ENCODE measurements at regions of chr9 and their contacts with region 1.

Region 1: DNA sequence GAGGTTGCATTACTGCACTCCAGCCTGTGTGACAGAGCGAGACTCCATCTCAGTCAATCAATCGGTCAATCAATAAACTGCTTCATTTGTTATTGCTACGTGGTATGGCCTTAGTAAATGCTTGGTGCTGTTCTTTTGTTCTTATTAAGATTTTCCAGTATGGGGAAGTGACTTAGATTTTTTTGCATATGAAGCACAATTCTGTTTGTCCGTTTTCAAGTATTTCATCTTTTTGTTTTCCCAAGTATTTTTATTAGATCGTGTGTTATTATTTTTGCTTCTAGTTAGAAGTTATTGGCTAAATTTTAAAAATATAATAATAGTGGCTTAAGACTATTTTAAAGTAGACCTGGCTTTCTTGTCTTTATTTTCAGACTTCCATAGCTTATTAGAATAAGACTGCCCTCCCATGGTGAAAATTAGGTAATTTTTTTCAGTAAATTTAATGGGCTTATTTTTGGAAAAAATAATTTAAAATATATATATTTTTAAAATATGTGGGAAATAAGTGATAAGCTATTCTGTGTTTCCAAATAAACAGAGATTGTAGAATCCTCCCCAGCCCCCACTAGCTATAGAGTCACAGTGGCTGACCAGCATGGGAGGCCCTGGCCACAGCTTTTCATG is 14.7 kb upstream of the OMD start:
- DNase-seq: no peak
- ATAC-seq: no peak
- H3K4me3 ChIP-seq: no peak overlapping the region
- H3K27ac ChIP-seq: no peak overlapping the region
- H3K4me1 ChIP-seq: no peaks in the 10 kb centered on the region
- H3K27me3 ChIP-seq: no peaks in the 10 kb centered on the region
- CTCF ChIP-seq: peak in 7 of 9 donors; percentile 27 to 60 (median 48)

Region 2: GRCh38 chr9:92133949-92134604 is 304.9 kb before region 1 on chr9:
- intact Hi-C with region 1: loop called in 1 of 10 experiments (anchors 10 kb)
- DNase-seq: peak; percentile 72 to 81
- ATAC-seq: peak; percentile 48 to 86 (median 76)
- H3K4me3 ChIP-seq: peak overlapping the region in 3 of 10 donors; percentile 14 to 34 (median 16)
- H3K27ac ChIP-seq: no peak overlapping the region
- H3K4me1 ChIP-seq: peaks cover 0 to 9% (median 7%) of the 10 kb centered on the region in 9 donors
- H3K27me3 ChIP-seq: peaks cover 0 to 22% (median 0%) of the 10 kb centered on the region in 7 donors
- CTCF ChIP-seq: peak; percentile 81 to 99 (median 95)

Region 3: GRCh38 chr9:92332577-92333281 is 106.3 kb before region 1 on chr9:
- intact Hi-C with region 1: loop called in 1 of 10 experiments (anchors 10 kb)
- DNase-seq: peak in 1 of 2 donors; percentile 16
- ATAC-seq: peak in 7 of 8 donors; percentile 57 to 83 (median 79)
- H3K4me3 ChIP-seq: no peak overlapping the region
- H3K27ac ChIP-seq: peak overlapping the region in 8 of 10 donors; percentile 33 to 69 (median 63)
- H3K4me1 ChIP-seq: peaks cover 0 to 15% (median 0%) of the 10 kb centered on the region in 9 donors
- H3K27me3 ChIP-seq: no peaks in the 10 kb centered on the region
- CTCF ChIP-seq: no peak

Region 4: DNA sequence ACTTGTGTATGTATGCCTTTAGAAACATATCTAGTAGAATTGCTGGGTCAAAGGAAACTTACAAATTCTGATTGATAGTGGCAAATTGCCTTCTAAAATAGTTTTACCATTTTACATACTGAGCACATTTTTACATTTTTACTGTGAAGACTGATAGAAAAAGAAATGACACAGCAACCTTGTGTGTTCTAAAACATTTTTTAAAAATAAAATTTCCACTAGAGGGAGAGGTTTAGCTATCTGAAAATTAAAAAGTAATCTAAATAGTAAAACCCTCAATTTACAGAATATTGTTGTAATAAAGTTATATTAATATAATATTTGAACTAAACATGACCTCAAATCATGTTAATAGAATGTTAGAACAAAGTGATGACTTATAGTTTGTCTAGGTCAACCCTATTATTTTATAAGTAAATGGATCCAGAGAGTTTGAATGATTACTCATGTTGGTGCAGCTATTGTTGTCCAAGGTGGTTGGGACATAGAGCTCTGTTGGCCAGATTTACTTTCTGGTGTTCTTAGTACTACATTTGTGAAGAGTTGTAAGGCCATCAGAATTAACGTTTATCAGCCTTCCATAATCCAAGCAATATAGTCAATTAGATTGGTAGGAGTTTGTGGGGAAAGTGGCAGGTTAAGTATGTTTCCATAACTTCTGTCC is 96.1 kb before region 1 on chr9:
- intact Hi-C with region 1: loop called in 5 of 10 experiments (anchors 2 to 10 kb)
- DNase-seq: no peak
- ATAC-seq: no peak
- H3K4me3 ChIP-seq: no peak overlapping the region
- H3K27ac ChIP-seq: no peak overlapping the region
- H3K4me1 ChIP-seq: no peaks in the 10 kb centered on the region
- H3K27me3 ChIP-seq: no peaks in the 10 kb centered on the region
- CTCF ChIP-seq: peak in 6 of 9 donors; percentile 32 to 51 (median 40)

Region 5: DNA sequence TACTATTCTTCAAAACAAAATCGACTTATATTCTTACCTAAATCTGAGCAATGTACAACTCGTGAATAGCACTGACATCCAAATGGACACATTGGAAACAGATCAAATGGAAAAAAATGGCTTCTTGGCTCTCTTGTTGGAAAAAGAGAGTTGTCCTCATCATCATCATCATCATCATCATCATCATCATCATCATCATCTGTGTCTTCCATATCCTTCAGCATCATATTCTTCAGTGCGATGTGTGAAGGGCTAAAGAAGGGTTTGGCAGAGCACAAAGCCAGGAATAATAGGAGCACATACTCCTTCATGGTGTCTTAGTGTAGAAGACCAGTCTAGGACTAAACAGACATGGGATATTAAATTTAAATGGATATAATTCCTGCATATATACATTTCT is 35.6 kb after region 1 on chr9:
- intact Hi-C with region 1: no loop called
- DNase-seq: no peak
- ATAC-seq: no peak
- H3K4me3 ChIP-seq: no peak overlapping the region
- H3K27ac ChIP-seq: no peak overlapping the region
- H3K4me1 ChIP-seq: peaks cover 0 to 16% (median 5%) of the 10 kb centered on the region in 9 donors
- H3K27me3 ChIP-seq: no peaks in the 10 kb centered on the region
- CTCF ChIP-seq: no peak

Measured in heart right ventricle (tissue), 16 donors.